ENCODE measurements at regions of chr2 and their contacts with region 1.

Region 1: GRCh38 chr2:118056165-118056534 is 32.1 kb upstream of the INSIG2 start:
- DNase-seq: peak in 1 of 3 donors; percentile 43
- ATAC-seq: peak; percentile 65 to 71
- H3K4me3 ChIP-seq: no peak overlapping the region
- H3K27ac ChIP-seq: no peak overlapping the region
- H3K4me1 ChIP-seq: no peaks in the 10 kb centered on the region
- H3K27me3 ChIP-seq: no peaks in the 10 kb centered on the region

Region 2: GRCh38 chr2:118103951-118104940 is 48.1 kb after region 1 on chr2:
- intact Hi-C with region 1: no loop called
- DNase-seq: no peak
- ATAC-seq: no peak
- H3K4me3 ChIP-seq: no peak overlapping the region
- H3K27ac ChIP-seq: no peak overlapping the region
- H3K4me1 ChIP-seq: no peaks in the 10 kb centered on the region
- H3K27me3 ChIP-seq: no peaks in the 10 kb centered on the region

Region 3: GRCh38 chr2:118186110-118186857 is 130.1 kb after region 1 on chr2:
- intact Hi-C with region 1: loop called in 1 of 4 experiments (anchors 10 kb)
- DNase-seq: peak; percentile 92 to 96 (median 95)
- ATAC-seq: peak; percentile 98
- H3K4me3 ChIP-seq: peak overlapping the region; percentile 69
- H3K27ac ChIP-seq: peak overlapping the region; percentile 57
- H3K4me1 ChIP-seq: peaks cover 2% of the 10 kb centered on the region
- H3K27me3 ChIP-seq: no peaks in the 10 kb centered on the region

Region 4: DNA sequence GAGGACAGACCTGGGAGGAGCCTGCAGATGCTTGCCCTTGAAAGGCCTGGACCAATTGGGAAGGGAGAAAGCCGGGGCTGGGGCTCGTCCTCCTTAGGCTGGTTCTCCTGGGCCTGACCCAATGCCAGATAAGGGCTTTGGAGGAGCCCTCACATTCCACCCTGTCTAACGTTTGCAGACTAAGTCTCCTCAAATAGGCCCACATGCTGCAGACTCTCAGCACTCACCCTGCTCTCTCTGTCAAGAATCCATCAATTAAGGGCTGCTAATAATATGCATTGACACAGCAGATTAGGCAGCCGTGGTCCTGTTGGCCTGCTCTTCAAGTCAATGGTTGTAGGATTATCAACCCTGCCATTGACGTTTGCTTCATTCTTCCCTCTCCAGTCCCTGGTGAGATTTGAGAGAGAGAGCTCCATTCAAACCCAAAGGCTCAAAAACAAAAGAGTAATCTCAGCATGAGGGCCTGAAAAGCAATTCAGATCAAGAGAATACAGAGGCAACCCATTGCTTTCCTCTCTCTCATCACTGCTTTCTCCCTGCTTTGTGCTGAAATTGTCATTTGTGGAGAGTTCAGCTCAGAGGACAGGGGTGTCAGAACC is 199.7 kb after region 1 on chr2:
- intact Hi-C with region 1: no loop called
- DNase-seq: peak in 1 of 3 donors; percentile 44
- ATAC-seq: no peak
- H3K4me3 ChIP-seq: no peak overlapping the region
- H3K27ac ChIP-seq: no peak overlapping the region
- H3K4me1 ChIP-seq: no peaks in the 10 kb centered on the region
- H3K27me3 ChIP-seq: no peaks in the 10 kb centered on the region